ENCODE measurements at regions of chr3 and their contacts with region 1.

Region 1: DNA sequence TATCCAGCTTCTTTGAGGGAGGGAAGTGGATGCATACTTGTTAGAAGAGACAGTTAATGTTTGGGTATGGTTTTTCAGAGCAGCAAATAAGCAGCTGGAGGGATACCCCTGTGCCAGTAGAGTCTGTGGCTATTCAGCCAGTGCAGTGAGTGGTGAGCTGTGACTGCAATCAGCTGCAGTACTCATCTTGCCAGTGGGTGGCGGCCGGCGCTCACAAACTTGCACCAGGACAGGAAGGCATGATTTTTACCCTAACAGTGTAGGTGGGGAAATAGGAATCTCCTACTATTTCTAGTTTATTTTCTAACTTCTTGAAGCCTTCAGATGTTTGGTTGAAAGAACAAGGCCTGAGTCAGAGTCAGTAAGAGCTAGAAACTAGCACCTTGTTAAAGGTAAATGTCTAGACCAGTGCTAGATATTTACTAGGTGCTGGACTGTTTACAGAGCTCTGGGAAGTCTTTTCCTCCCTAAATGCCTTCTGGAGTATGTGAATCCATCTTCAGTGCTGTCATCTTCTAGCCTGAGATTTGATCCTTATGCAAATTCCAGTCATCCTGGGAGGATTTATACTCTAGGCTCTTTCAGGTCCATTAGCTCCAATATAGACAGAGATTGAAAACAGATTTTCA is 23.6 kb downstream of the TIMP4 start:
- DNase-seq: no peak
- H3K4me3 ChIP-seq: no peak overlapping the region
- H3K27ac ChIP-seq: no peak overlapping the region
- H3K4me1 ChIP-seq: peaks cover 4 to 20% (median 12%) of the 10 kb centered on the region in 4 donors
- H3K27me3 ChIP-seq: peaks cover 0 to 3% (median 0%) of the 10 kb centered on the region in 4 donors
- CTCF ChIP-seq: peak; percentile 82
- EP300 ChIP-seq: no peak
- POLR2A ChIP-seq: no peak

Region 2: GRCh38 chr3:11982341-11982941 is 152.7 kb before region 1 on chr3:
- intact Hi-C with region 1: no loop called
- DNase-seq: no peak
- H3K4me3 ChIP-seq: no peak overlapping the region
- H3K27ac ChIP-seq: no peak overlapping the region
- H3K4me1 ChIP-seq: no peaks in the 10 kb centered on the region
- H3K27me3 ChIP-seq: peaks cover 0 to 12% (median 0%) of the 10 kb centered on the region in 4 donors
- CTCF ChIP-seq: no peak
- EP300 ChIP-seq: no peak
- POLR2A ChIP-seq: no peak

Region 3: GRCh38 chr3:12175844-12176453 is 40.8 kb after region 1 on chr3:
- intact Hi-C with region 1: loop called (anchors 2 kb)
- DNase-seq: no peak
- H3K4me3 ChIP-seq: no peak overlapping the region
- H3K27ac ChIP-seq: no peak overlapping the region
- H3K4me1 ChIP-seq: peaks cover 8 to 30% (median 23%) of the 10 kb centered on the region in 4 donors
- H3K27me3 ChIP-seq: no peaks in the 10 kb centered on the region
- CTCF ChIP-seq: peak; percentile 71 to 79 (median 76)
- EP300 ChIP-seq: no peak
- POLR2A ChIP-seq: no peak

Measured in esophagus muscularis mucosa (tissue), 4 donors.